ENCODE measurements at regions of chr3 and their contacts with region 1.

Region 1: GRCh38 chr3:189947948-189948723 is 172.6 kb downstream of the P3H2 start:
- DNase-seq: peak; percentile 51
- H3K4me3 Mint-ChIP-seq: peak overlapping the region; percentile 28
- H3K27ac Mint-ChIP-seq: no peak overlapping the region
- H3K4me1 Mint-ChIP-seq: peaks cover 5% of the 10 kb centered on the region
- H3K27me3 Mint-ChIP-seq: peaks cover 8% of the 10 kb centered on the region

Region 2: GRCh38 chr3:189270248-189270832 is 677.8 kb before region 1 on chr3:
- CTCF ChIA-PET with region 1: interaction called, 55 read pairs
- intact Hi-C with region 1: loop called (anchors 1 kb)
- DNase-seq: peak; percentile 59
- H3K4me3 Mint-ChIP-seq: no peak overlapping the region
- H3K27ac Mint-ChIP-seq: no peak overlapping the region
- H3K4me1 Mint-ChIP-seq: peaks cover 13% of the 10 kb centered on the region
- H3K27me3 Mint-ChIP-seq: no peaks in the 10 kb centered on the region

Region 3: DNA sequence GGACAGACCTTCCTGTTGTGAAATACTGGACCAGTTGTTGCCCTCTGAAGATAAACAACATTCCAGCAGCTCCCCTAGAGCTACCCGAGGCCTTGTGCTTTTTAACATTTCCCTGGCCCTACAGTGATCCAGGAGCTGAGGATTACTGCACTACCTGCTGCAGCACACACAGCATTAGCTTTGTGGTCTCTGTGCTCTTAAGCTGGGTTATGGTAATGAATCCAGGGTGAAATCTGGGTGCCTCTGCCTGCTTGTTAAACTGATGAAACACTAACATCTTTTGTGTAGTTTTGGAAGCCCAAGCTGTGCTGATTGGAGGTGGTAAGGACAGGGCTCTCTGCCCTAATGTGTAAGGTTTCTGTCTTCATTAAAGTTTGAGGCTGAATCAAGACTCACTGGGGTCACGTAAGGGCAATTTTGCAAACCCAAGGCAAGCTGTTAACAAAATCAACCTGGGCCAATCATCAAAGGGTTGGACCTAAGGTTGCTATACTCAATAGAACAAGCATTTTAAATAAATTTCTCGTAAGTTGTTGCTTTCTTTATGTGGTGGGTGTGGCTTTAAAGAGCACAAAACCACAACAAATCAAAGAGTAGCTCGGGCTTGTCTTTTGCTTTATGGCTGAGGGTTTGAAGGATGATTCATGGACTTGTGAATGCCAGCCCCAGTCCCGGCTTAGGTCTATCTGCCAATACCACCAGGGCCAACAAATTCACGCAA is 592.5 kb before region 1 on chr3:
- CTCF ChIA-PET with region 1: interaction called, 3 read pairs
- intact Hi-C with region 1: loop called (anchors 5 kb)
- DNase-seq: peak; percentile 54
- H3K4me3 Mint-ChIP-seq: peak overlapping the region; percentile 7
- H3K27ac Mint-ChIP-seq: peak overlapping the region; percentile 76
- H3K4me1 Mint-ChIP-seq: peaks cover 21% of the 10 kb centered on the region
- H3K27me3 Mint-ChIP-seq: no peaks in the 10 kb centered on the region

Region 4: DNA sequence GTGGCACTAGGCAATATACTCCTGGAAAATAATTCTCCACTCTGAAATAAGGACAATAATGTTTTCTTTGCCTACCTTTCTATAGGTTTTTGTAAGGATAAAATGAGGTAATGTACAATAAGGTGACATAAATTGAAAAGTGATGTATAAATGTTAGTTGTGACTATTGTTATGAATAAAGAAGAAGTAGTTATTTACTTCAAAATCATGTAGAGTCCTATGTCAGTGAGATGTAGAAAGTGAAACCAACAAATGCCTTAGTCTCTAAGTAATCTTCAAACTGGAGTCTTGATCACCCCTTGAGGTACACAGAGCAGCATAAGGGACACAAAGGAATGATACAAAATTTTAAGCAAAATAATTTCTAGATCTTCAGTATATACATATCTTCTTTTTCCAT is 377.2 kb before region 1 on chr3:
- CTCF ChIA-PET with region 1: no interaction called
- intact Hi-C with region 1: loop called (anchors 5 kb)
- DNase-seq: no peak
- H3K4me3 Mint-ChIP-seq: no peak overlapping the region
- H3K27ac Mint-ChIP-seq: no peak overlapping the region
- H3K4me1 Mint-ChIP-seq: peaks cover 30% of the 10 kb centered on the region
- H3K27me3 Mint-ChIP-seq: no peaks in the 10 kb centered on the region

Region 5: DNA sequence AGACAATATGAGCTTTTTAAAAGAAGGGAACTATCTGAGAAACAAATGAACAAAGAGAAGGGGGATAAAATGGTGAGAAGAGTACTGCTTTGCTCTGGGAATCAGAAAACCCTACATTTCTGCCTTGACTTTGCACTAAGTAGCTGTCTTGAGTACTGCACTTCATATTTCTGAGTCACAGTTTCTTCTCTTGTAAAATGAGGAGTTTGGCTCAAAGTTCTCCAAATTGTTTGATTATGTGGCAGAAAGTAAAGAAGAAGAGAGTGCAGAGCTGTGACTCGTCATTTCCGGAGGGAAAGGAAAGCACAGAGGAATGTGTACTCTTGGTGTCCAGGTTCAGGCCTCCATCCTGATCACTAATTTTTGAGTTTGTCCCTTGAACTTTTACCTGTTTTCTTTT is 262.3 kb before region 1 on chr3:
- CTCF ChIA-PET with region 1: no interaction called
- intact Hi-C with region 1: loop called (anchors 10 kb)
- DNase-seq: no peak
- H3K4me3 Mint-ChIP-seq: no peak overlapping the region
- H3K27ac Mint-ChIP-seq: no peak overlapping the region
- H3K4me1 Mint-ChIP-seq: peaks cover 18% of the 10 kb centered on the region
- H3K27me3 Mint-ChIP-seq: no peaks in the 10 kb centered on the region